Common myeloid progenitor, CD34-positive (primary cell): ENCODE measurements at regions of chr4 and their contacts with region 1.

Region 1: DNA sequence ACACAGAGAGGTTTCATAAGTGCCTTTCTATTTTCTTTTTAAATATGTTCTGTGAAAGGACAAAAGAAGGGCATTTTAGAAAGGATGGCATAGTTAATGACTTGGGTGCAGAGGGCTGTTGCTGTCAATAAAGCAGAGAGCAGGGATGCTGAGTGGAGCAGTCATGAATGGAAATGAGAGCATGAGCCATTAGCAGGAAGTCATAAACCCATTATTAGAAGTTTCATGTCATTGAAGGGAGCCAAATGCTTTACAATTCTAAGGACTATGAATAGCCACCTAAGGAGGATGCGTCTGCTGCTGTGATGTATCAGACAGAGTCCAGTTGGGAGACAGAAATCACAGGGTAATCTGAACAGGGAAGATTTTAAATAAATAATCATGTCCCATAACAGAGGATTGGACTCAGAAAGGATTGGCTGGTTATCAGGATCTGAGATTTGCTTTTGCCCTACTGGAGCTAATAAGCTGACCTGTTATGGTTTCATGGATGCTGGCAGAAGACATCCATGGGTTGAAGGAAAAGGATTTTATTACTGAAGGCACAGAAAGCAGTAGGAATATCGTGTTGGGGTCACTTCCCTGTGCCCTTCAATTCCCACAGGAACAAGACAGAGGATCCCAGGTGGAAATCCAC is 47.5 kb upstream of the WDR19 start:
- DNase-seq: no peak
- H3K4me3 ChIP-seq: peak overlapping the region in 1 of 7 experiments; percentile 54
- H3K27ac ChIP-seq: no peak overlapping the region
- H3K4me1 ChIP-seq: peaks cover 0 to 4% (median 3%) of the 10 kb centered on the region in 4 experiments
- H3K27me3 ChIP-seq: no peaks in the 10 kb centered on the region

Region 2: GRCh38 chr4:38914854-38915253 is 219.9 kb before region 1 on chr4:
- CTCF ChIA-PET with region 1: interaction called, 136 read pairs
- POLR2A ChIA-PET with region 1: no interaction called
- DNase-seq: peak in 1 of 3 donors; percentile 23
- H3K4me3 ChIP-seq: peak overlapping the region in 4 of 7 experiments; percentile 2 to 65 (median 38)
- H3K27ac ChIP-seq: no peak overlapping the region
- H3K4me1 ChIP-seq: peaks cover 0 to 8% (median 3%) of the 10 kb centered on the region in 4 experiments
- H3K27me3 ChIP-seq: no peaks in the 10 kb centered on the region

Region 3: GRCh38 chr4:39205000-39205399 is 70.2 kb after region 1 on chr4:
- CTCF ChIA-PET with region 1: no interaction called
- POLR2A ChIA-PET with region 1: no interaction called
- DNase-seq: no peak
- H3K4me3 ChIP-seq: no peak overlapping the region
- H3K27ac ChIP-seq: no peak overlapping the region
- H3K4me1 ChIP-seq: no peaks in the 10 kb centered on the region
- H3K27me3 ChIP-seq: no peaks in the 10 kb centered on the region